ENCODE measurements at regions of chr3 and their contacts with region 1.

Region 1: GRCh38 chr3:101849051-101849720 is at the start of gene NFKBIZ:
- DNase-seq: peak; percentile 87
- ATAC-seq: peak; percentile 82
- H3K4me3 Mint-ChIP-seq: peak within 1 kb of the TSS; percentile 98
- H3K27ac Mint-ChIP-seq: peak within 1 kb of the TSS; percentile 96
- H3K4me1 Mint-ChIP-seq: peaks cover 63% of the 10 kb centered on the region
- H3K27me3 Mint-ChIP-seq: no peaks in the 10 kb centered on the region
- CTCF ChIP-seq: no peak
- total RNA-seq, gene NFKBIZ: 391 and 421 TPM in 2 replicates

Region 2: DNA sequence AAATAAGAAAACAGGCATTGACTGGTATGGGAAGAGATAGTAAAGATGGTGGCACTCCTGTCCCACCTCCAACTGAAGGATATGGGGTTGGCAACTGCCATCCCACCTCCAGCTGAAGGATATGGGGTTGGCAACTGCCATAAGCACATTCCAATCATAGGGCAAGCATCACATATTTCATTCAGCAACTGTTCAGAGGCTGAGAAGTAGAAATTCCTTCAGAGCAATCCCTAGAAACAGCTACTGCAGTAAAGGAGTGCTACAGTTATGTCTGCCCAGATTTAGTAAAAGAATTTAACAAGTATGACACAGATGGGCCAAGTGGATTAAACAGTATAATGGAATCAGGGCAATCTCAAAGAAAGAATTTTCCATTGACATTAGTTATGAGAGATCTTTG is 685.6 kb before region 1 on chr3:
- CTCF ChIA-PET with region 1: no interaction called
- POLR2A ChIA-PET with region 1: no interaction called
- intact Hi-C with region 1: no loop called
- DNase-seq: no peak
- ATAC-seq: no peak
- H3K4me3 Mint-ChIP-seq: no peak overlapping the region
- H3K27ac Mint-ChIP-seq: no peak overlapping the region
- H3K4me1 Mint-ChIP-seq: no peaks in the 10 kb centered on the region
- H3K27me3 Mint-ChIP-seq: no peaks in the 10 kb centered on the region
- CTCF ChIP-seq: no peak

Region 3: GRCh38 chr3:101819758-101820157 is 29.4 kb before region 1 on chr3:
- CTCF ChIA-PET with region 1: interaction called, 16 read pairs
- POLR2A ChIA-PET with region 1: interaction called, 47 read pairs
- intact Hi-C with region 1: no loop called
- DNase-seq: no peak
- ATAC-seq: peak; percentile 83
- H3K4me3 Mint-ChIP-seq: no peak overlapping the region
- H3K27ac Mint-ChIP-seq: peak overlapping the region; percentile 81
- H3K4me1 Mint-ChIP-seq: peaks cover 64% of the 10 kb centered on the region
- H3K27me3 Mint-ChIP-seq: no peaks in the 10 kb centered on the region
- CTCF ChIP-seq: no peak

Region 4: GRCh38 chr3:101861212-101861788 is 12.1 kb after region 1 on chr3:
- CTCF ChIA-PET with region 1: interaction called, 3 read pairs
- POLR2A ChIA-PET with region 1: interaction called, 36 read pairs
- intact Hi-C with region 1: loop called (anchors 1 kb)
- DNase-seq: no peak
- ATAC-seq: peak; percentile 64
- H3K4me3 Mint-ChIP-seq: peak overlapping the region; percentile 51
- H3K27ac Mint-ChIP-seq: peak overlapping the region; percentile 75
- H3K4me1 Mint-ChIP-seq: peaks cover 76% of the 10 kb centered on the region
- H3K27me3 Mint-ChIP-seq: no peaks in the 10 kb centered on the region
- CTCF ChIP-seq: no peak

Region 5: GRCh38 chr3:101902041-101902440 is 52.9 kb after region 1 on chr3:
- CTCF ChIA-PET with region 1: no interaction called
- POLR2A ChIA-PET with region 1: interaction called, 29 read pairs
- intact Hi-C with region 1: loop called (anchors 1 kb)
- DNase-seq: no peak
- ATAC-seq: peak; percentile 56
- H3K4me3 Mint-ChIP-seq: peak overlapping the region; percentile 36
- H3K27ac Mint-ChIP-seq: peak overlapping the region; percentile 91
- H3K4me1 Mint-ChIP-seq: peaks cover 61% of the 10 kb centered on the region
- H3K27me3 Mint-ChIP-seq: no peaks in the 10 kb centered on the region
- CTCF ChIP-seq: no peak

Region 6: DNA sequence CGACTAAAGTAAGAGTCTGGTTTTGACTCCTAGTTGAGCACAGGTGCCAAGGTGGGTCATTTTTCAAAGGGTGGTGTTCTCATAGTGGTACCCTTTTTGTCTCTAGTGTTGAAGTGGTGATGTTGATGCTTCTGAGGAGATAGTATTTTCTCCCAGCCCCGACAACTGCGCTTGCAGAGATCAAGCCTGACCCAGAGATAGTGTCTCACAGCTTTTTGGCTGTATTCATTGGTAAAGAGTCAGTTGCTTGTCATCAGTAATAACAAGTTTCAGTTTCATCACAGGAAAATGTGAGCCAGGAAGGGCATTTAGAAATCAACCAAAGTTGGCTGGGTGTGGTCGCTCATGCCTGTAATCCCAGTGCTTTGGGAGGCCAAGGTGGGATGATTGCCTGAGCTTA is 139.4 kb after region 1 on chr3:
- CTCF ChIA-PET with region 1: no interaction called
- POLR2A ChIA-PET with region 1: interaction called, 9 read pairs
- intact Hi-C with region 1: loop called (anchors 2 kb)
- DNase-seq: no peak
- ATAC-seq: peak; percentile 36
- H3K4me3 Mint-ChIP-seq: no peak overlapping the region
- H3K27ac Mint-ChIP-seq: peak overlapping the region; percentile 75
- H3K4me1 Mint-ChIP-seq: peaks cover 52% of the 10 kb centered on the region
- H3K27me3 Mint-ChIP-seq: no peaks in the 10 kb centered on the region
- CTCF ChIP-seq: no peak

Region 7: GRCh38 chr3:102057781-102058421 is 208.7 kb after region 1 on chr3:
- CTCF ChIA-PET with region 1: interaction called, 3 read pairs
- POLR2A ChIA-PET with region 1: interaction called, 38 read pairs
- intact Hi-C with region 1: loop called (anchors 2 kb)
- DNase-seq: no peak
- ATAC-seq: peak; percentile 75
- H3K4me3 Mint-ChIP-seq: peak overlapping the region; percentile 42
- H3K27ac Mint-ChIP-seq: peak overlapping the region; percentile 97
- H3K4me1 Mint-ChIP-seq: peaks cover 61% of the 10 kb centered on the region
- H3K27me3 Mint-ChIP-seq: no peaks in the 10 kb centered on the region
- CTCF ChIP-seq: no peak

Region 8: DNA sequence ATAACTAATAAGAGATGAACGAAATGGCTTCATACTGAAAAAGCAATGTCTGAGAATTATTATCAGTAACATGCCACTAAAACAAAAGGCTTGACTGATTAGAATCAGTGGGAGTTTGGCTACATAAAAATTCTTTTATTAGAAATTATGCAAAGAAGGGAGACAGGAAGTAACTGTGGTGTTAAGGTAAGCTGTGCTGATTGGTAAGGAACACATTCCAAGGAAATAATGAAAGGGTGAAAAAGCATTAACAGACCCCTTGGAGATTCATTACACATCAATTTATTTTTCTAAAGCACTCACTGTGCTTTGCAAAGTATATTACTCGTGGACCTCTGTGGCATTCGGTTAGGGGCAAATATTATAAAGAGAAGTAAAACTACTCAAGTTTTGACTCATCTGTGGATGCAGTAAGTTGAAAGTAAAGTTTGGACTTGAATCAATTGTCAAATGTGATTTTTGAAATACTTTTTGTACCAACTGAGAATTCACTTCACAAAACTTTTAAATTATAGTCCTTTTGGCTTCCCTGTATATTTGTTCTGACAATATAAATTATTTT is 409.6 kb after region 1 on chr3:
- CTCF ChIA-PET with region 1: no interaction called
- POLR2A ChIA-PET with region 1: no interaction called
- intact Hi-C with region 1: no loop called
- DNase-seq: no peak
- ATAC-seq: no peak
- H3K4me3 Mint-ChIP-seq: no peak overlapping the region
- H3K27ac Mint-ChIP-seq: no peak overlapping the region
- H3K4me1 Mint-ChIP-seq: peaks cover 8% of the 10 kb centered on the region
- H3K27me3 Mint-ChIP-seq: peaks cover 1% of the 10 kb centered on the region
- CTCF ChIP-seq: no peak